Mammary epithelial cell (primary cell): ENCODE measurements at regions of chr12 and their contacts with region 1.

Region 1: DNA sequence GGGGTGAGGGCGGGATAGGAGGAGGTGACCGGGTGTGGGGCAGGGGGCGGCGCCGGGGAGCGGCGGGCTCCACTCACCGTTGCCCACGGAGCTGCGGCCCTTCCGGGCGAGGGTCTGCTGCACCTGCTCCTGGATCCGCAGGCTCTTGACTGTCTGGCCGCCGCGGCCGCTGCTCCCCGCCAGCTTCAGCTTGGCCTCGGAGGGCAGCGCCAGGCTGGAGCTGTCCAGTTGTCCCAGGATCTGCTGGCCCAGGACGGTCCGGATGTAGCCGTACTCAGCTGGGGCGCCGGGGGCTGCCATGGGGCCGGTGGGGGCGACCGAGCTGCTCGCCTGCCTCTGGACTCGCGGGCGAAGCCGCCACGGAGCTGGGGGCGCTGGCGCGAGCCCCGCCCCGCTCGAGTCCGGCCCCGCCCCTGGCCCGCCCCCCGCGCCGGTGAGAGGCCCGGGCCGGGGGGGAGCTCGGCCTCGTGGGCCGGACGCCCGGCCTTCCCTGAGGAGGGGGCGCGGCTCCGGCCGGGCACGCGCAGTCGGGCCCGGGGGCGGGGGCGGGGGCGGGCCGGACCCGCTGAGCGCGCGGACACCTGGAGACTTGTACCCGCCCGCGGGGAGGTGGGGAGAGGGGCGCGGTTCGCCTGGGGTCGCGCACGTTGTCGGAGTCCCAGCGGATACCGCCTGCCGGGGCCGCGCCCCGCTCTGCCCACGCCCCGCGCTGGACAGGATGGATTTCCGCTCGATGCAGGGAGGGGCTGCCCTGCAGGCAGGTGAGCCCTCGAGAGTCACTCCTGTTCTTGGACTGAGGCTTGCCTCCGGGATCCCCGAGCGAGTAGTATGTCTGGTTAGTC is at the start of gene PKP2:
- DNase-seq: peak; percentile 98
- H3K4me3 ChIP-seq: peak within 1 kb of the TSS; percentile 66 to 97 (median 85)
- H3K27ac ChIP-seq: peak within 1 kb of the TSS; percentile 83
- H3K4me1 ChIP-seq: peaks cover 44% of the 10 kb centered on the region
- H3K27me3 ChIP-seq: no peaks in the 10 kb centered on the region
- CTCF ChIP-seq: no peak
- total RNA-seq, gene PKP2: 42.3 to 42.8 TPM

Region 2: DNA sequence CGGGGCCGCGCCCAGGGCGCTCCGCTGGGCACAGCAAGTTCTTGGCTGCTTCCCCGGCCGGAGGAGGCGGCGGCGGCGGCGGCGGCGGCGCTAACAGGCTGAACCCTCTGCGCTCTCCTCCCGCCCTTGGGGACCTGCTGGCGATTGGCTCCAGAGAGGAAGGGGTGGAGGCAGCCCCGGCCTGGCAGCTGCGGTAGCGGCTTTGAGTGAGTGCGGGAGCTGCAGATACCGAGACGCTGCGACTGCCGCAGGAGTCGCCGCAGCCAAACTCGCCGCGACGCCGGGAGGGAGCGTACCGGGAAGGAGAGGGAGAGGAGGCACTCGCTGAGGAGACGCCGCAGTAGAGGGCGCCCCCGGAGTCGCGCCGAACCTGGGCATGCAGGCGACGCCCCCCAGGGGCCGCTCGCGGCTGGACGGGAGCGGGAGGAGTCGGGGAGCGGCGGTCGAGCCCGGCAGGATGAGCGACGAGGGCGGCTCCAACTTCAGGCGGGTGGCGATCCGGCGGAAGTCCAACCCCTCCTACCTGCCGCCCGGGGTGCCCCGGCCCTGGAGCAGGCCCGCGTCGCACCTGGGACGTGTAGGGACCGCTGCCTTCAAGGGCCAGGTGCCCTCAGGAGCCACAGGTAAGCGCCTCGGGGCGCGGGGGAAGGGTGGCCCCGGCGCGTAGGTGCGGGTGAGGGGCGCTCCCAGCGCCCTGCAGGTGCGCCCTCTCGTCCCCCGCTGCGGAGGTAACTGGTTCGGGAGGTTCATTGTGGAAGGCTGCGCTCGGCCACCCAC is 497.1 kb before region 1 on chr12 and contains the start of gene FGD4:
- CTCF ChIA-PET with region 1: no interaction called
- dilution Hi-C with region 1: no loop called
- in situ Hi-C with region 1: no loop called
- intact Hi-C with region 1: loop called (anchors 10 kb)
- DNase-seq: peak; percentile 95
- H3K4me3 ChIP-seq: peak within 1 kb of the TSS; percentile 72 to 99 (median 93)
- H3K27ac ChIP-seq: peak within 1 kb of the TSS; percentile 90
- H3K4me1 ChIP-seq: peaks cover 21% of the 10 kb centered on the region
- H3K27me3 ChIP-seq: no peaks in the 10 kb centered on the region
- CTCF ChIP-seq: peak; percentile 15 to 58
- total RNA-seq, gene FGD4: 20.8 to 35.3 TPM

Region 3: DNA sequence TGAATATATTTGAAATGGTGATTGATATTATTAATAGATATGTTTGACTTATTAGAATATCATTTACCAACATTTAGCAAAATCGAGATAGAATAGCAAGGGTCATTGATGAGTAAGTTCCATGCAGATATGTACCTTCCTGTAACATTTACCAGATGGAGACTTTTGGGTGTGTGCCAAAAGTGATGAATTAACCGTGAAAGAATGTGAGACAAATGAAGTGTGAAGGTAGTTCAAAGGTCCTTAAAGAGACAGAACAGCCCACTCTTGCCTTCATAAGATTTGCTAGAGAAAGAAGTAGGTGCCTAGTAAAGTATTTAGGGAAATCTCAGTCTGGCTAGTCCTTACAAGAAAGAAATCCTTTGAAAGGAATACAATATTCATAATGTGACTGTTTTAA is 451.8 kb before region 1 on chr12:
- CTCF ChIA-PET with region 1: no interaction called
- dilution Hi-C with region 1: no loop called
- in situ Hi-C with region 1: no loop called
- intact Hi-C with region 1: loop called (anchors 10 kb)
- DNase-seq: peak; percentile 90
- H3K4me3 ChIP-seq: no peak overlapping the region
- H3K27ac ChIP-seq: peak overlapping the region; percentile 45
- H3K4me1 ChIP-seq: peaks cover 67% of the 10 kb centered on the region
- H3K27me3 ChIP-seq: no peaks in the 10 kb centered on the region
- CTCF ChIP-seq: no peak

Region 4: DNA sequence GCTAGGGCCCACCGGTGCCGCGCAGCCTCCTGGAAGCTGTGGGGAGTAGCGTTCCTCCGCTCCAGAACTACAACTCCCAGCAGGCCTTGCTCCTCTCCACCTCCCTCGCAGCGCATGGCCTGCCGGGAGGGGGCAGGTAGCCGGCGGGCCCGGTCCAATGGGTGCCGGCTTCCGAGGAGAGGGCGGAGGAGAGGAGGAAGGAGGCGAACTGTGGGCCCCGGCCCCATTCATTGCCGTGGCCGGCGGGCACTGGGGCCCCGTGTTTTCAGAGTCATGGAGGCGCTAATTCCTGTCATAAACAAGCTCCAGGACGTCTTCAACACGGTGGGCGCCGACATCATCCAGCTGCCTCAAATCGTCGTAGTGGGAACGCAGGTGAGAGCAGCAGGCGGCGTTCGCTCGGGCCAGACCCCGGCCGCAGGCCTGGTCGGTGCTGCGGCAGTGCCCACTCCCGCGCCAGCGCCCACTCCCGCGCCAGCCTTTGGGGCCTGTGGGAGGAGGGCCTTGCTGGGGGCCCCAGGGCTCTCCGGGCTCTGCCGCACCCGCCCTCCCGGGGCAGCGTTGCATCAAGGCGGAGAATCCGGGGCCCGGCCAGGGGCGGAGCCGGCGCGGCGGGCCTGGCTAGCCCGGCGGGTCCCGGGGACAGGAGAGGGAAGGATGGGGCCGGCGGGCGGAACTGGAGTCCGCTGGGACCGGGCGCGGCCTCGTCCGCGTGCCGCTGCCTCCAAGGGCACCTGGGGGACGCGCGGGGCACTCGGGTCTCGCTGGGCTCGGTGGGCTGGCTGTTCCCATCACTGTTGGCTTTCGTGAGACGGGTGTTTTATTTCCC is 217.3 kb before region 1 on chr12 and contains the start of gene DNM1L:
- CTCF ChIA-PET with region 1: no interaction called
- dilution Hi-C with region 1: no loop called
- in situ Hi-C with region 1: no loop called
- intact Hi-C with region 1: loop called (anchors 10 kb)
- DNase-seq: peak; percentile 96
- H3K4me3 ChIP-seq: peak within 1 kb of the TSS; percentile 82 to 100 (median 97)
- H3K27ac ChIP-seq: peak within 1 kb of the TSS; percentile 96
- H3K4me1 ChIP-seq: peaks cover 10% of the 10 kb centered on the region
- H3K27me3 ChIP-seq: no peaks in the 10 kb centered on the region
- CTCF ChIP-seq: peak in 1 of 2 donors; percentile 4
- total RNA-seq, gene DNM1L: 96.9 to 151 TPM

Region 5: GRCh38 chr12:32918890-32919801 is 22.5 kb after region 1 on chr12:
- CTCF ChIA-PET with region 1: no interaction called
- dilution Hi-C with region 1: no loop called
- in situ Hi-C with region 1: no loop called
- intact Hi-C with region 1: loop called (anchors 1 kb)
- DNase-seq: peak; percentile 90
- H3K4me3 ChIP-seq: no peak overlapping the region
- H3K27ac ChIP-seq: peak overlapping the region; percentile 96
- H3K4me1 ChIP-seq: peaks cover 47% of the 10 kb centered on the region
- H3K27me3 ChIP-seq: no peaks in the 10 kb centered on the region
- CTCF ChIP-seq: peak; percentile 55 to 60